ENCODE measurements at regions of chr22 and their contacts with region 1.

Region 1: GRCh38 chr22:24416095-24416494 is 11.3 kb upstream of the ADORA2A start:
- DNase-seq: no peak
- H3K4me3 ChIP-seq: no peak overlapping the region
- H3K4me3 Mint-ChIP-seq: no peak overlapping the region
- H3K27ac Mint-ChIP-seq: no peak overlapping the region
- H3K4me1 ChIP-seq: peaks cover 13% of the 10 kb centered on the region
- H3K4me1 Mint-ChIP-seq: peaks cover 6% of the 10 kb centered on the region
- H3K27me3 ChIP-seq: no peaks in the 10 kb centered on the region
- H3K27me3 Mint-ChIP-seq: no peaks in the 10 kb centered on the region
- CTCF ChIP-seq: no peak

Region 2: DNA sequence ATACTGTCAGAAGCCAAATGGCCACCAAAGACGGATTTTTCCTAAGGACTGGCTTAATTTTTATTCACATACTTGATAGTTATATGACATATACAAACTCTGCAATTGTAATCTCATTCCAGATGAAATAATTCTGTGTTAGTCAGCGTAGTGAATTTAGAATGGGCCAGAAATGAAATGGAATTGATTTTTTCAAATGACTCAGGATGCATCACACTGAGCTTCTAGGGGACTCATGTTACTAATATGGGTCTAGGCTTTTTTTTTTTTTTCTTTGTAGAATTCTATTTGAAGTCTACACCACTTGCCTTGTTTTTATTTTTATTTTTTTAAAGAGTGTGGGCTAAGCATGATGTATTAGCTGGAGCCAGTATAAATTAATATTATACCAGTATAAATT is 82.8 kb before region 1 on chr22:
- CTCF ChIA-PET with region 1: no interaction called
- POLR2A ChIA-PET with region 1: interaction called, 10 read pairs
- intact Hi-C with region 1: no loop called
- DNase-seq: no peak
- H3K4me3 ChIP-seq: no peak overlapping the region
- H3K4me3 Mint-ChIP-seq: no peak overlapping the region
- H3K27ac Mint-ChIP-seq: no peak overlapping the region
- H3K4me1 ChIP-seq: no peaks in the 10 kb centered on the region
- H3K4me1 Mint-ChIP-seq: no peaks in the 10 kb centered on the region
- H3K27me3 ChIP-seq: no peaks in the 10 kb centered on the region
- H3K27me3 Mint-ChIP-seq: no peaks in the 10 kb centered on the region
- CTCF ChIP-seq: no peak